ENCODE measurements at regions of chr7 and their contacts with region 1.

Region 1: DNA sequence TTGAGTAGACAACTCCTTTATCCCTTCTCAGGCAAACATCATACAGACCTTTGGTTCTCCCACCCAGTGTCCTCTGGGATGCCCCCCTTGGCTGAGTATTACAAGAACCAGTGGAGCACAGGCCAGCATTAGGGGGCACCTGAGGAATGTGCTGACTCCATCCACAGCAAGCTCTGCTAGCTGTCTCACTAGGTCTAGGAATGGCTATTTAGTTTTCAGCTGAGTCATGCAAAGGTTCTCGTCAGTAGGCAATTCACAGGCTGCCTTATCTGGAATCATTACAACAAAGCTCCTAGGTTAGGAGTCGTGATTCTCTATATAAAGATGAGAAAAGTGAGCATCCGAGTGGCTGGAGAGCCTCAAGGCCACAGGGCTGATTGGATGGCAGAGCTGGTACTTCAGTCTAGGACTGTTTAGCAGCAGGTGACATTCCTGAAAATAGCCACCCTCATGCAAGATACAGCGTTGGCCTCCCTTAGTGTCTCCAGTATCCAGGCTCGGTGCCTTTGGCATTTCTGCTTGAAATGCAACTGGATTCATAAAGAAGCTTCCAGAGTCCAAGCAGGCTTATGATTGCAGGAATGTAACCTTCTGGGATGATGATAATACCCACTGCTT is 75.8 kb downstream of the CDCA7L start:
- DNase-seq: no peak
- H3K4me3 ChIP-seq: no peak overlapping the region
- H3K27ac ChIP-seq: no peak overlapping the region
- H3K4me1 ChIP-seq: peaks cover 52% of the 10 kb centered on the region
- H3K27me3 ChIP-seq: no peaks in the 10 kb centered on the region
- CTCF ChIP-seq: no peak

Region 2: GRCh38 chr7:21293771-21294170 is 576.1 kb before region 1 on chr7:
- CTCF ChIA-PET with region 1: no interaction called
- POLR2A ChIA-PET with region 1: no interaction called
- intact Hi-C with region 1: no loop called
- DNase-seq: peak; percentile 14
- H3K4me3 ChIP-seq: no peak overlapping the region
- H3K27ac ChIP-seq: no peak overlapping the region
- H3K4me1 ChIP-seq: no peaks in the 10 kb centered on the region
- H3K27me3 ChIP-seq: peaks cover 58% of the 10 kb centered on the region
- CTCF ChIP-seq: no peak; the same call in 1 of the 2 replicates

Region 3: DNA sequence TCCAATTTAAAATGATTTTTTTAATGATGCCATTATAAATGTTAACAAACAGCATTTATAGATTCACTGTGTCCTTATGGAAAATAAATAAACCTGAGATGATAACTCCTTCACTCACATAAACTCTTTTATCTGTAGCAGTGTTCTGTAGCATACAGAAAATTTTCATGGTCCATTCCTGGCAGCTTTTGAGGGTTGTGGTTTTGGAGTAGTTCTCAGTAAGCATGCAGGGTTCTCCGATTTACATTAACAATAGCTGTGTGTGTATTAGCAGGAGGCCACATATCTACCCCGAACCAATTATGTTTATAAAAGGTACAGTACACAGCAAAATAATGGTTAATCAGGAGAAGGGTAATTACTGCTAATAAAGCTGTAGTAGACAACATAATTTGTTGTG is 86.9 kb before region 1 on chr7:
- CTCF ChIA-PET with region 1: interaction called, 10 read pairs
- POLR2A ChIA-PET with region 1: no interaction called
- intact Hi-C with region 1: no loop called
- DNase-seq: no peak
- H3K4me3 ChIP-seq: no peak overlapping the region
- H3K27ac ChIP-seq: no peak overlapping the region
- H3K4me1 ChIP-seq: no peaks in the 10 kb centered on the region
- H3K27me3 ChIP-seq: peaks cover 82% of the 10 kb centered on the region
- CTCF ChIP-seq: no peak

Region 4: GRCh38 chr7:21912305-21912704 is 42.4 kb after region 1 on chr7:
- CTCF ChIA-PET with region 1: no interaction called
- POLR2A ChIA-PET with region 1: interaction called, 3 read pairs
- intact Hi-C with region 1: loop called (anchors 5 kb)
- DNase-seq: peak; percentile 53
- H3K4me3 ChIP-seq: no peak overlapping the region
- H3K27ac ChIP-seq: peak overlapping the region; percentile 59
- H3K4me1 ChIP-seq: peaks cover 29% of the 10 kb centered on the region
- H3K27me3 ChIP-seq: peaks cover 13% of the 10 kb centered on the region
- CTCF ChIP-seq: no peak

Region 5: DNA sequence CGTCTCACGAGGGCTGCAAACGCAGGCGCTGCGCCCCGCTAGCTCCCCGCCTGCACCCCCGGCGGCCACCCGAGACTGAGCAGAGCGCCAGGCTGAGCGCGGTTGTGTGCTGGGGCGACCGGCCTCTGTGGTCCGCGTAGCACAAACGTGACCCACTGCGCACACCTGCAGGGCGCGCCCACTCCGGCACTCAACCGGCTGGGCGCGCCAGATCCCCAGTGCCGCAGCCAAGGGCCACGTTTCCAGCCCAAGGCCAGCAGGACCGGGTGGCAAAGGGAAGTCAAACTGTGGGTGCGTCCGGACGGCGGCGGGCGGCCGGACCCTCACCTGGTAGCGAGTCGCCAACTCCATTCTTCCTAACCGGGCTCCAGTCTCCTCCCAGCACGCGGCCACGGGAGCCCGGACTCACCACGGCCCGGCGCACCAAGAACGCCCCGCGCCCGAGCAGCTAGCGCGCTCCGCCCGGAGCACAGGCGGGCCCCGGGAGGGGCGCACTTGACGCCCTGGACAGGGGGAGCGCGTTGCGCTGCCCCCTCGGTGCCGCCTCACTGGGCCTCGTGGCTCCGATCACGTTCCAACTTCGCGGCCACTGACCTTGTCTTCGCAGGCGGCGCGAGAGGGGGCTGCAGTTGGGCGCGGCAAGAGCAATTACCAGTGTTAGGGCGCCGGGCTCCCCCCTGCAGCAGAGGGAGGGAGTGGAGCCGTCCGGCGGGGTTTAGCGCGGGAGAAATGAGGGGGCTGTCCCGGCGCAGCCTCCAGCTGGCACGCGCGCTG is 75.7 kb after region 1 on chr7 and contains the start of gene CDCA7L:
- CTCF ChIA-PET with region 1: no interaction called
- POLR2A ChIA-PET with region 1: interaction called, 3 read pairs
- intact Hi-C with region 1: loop called (anchors 5 kb)
- DNase-seq: peak; percentile 88
- H3K4me3 ChIP-seq: peak within 1 kb of the TSS; percentile 73
- H3K27ac ChIP-seq: peak within 1 kb of the TSS; percentile 96
- H3K4me1 ChIP-seq: peaks cover 38% of the 10 kb centered on the region
- H3K27me3 ChIP-seq: no peaks in the 10 kb centered on the region
- CTCF ChIP-seq: no peak
- total RNA-seq, gene CDCA7L: 80.9 and 89.2 TPM in 2 replicates

Region 6: DNA sequence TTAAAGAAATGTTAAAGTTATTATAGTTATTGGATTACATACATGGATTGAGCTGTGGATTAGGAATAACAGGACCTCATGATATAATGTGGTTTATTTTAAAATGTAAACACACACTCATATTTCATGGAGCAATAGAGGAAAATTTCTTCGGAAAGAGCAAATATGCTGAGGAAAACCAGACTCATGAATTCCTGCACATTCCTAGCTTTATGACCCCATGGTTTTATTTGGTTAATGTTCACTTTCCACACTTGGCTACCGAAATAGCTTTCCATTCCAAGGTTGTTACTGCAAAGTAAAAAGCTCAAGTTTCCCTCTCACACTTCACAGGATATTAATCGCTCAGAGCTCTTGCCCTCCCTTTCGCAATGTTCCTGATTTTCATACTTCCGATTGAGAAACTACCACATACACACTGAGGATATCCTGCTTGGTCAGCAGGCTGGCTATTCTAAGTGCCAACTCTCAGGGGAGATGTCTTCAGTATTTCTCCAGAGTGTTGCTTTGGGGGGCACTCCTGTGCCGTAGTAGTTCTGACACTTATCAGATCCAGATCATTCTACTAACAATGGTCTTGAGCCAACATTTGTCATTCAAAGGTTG is 707.6 kb after region 1 on chr7:
- CTCF ChIA-PET with region 1: no interaction called
- POLR2A ChIA-PET with region 1: no interaction called
- intact Hi-C with region 1: no loop called
- DNase-seq: peak; percentile 66
- H3K4me3 ChIP-seq: no peak overlapping the region
- H3K27ac ChIP-seq: no peak overlapping the region
- H3K4me1 ChIP-seq: peaks cover 10% of the 10 kb centered on the region
- H3K27me3 ChIP-seq: no peaks in the 10 kb centered on the region
- CTCF ChIP-seq: no peak

Measured in A673 (cell line).